ENCODE measurements at regions of chr15 and their contacts with region 1.

Region 1: GRCh38 chr15:101014921-101015841 is 96.0 kb downstream of the LRRK1 start:
- DNase-seq: peak; percentile 68 to 92
- ATAC-seq: peak; percentile 74 to 84
- H3K4me3 ChIP-seq: no peak overlapping the region
- H3K27ac ChIP-seq: no peak overlapping the region
- H3K4me1 ChIP-seq: no peaks in the 10 kb centered on the region
- CTCF ChIP-seq: peak; percentile 93
- EP300 ChIP-seq: no peak
- POLR2A ChIP-seq: no peak
- RAD21 ChIP-seq: peak; percentile 85 to 88

Region 2: DNA sequence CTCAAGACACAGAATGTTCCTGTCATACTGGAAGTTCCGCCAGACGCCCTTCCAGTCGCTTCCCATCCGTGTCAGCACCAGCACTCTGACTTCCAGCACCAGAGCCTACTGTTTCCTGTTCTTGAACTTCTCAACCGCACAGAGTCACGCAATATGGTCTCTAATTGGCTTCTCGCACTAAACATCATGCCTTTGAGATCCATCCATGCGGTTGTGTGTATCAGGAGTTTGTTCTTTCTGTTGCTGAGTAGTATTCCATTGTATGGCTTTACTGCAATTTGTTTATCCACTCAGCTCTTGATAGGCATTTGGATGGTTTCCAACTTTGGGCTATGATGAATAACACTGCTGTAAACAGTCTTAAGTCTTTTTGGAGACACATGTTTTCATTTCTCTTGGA is 16.0 kb after region 1 on chr15:
- CTCF ChIA-PET with region 1: interaction called, 12 read pairs
- POLR2A ChIA-PET with region 1: no interaction called
- DNase-seq: no peak
- ATAC-seq: no peak
- H3K4me3 ChIP-seq: no peak overlapping the region
- H3K27ac ChIP-seq: no peak overlapping the region
- H3K4me1 ChIP-seq: no peaks in the 10 kb centered on the region
- CTCF ChIP-seq: no peak
- EP300 ChIP-seq: no peak
- POLR2A ChIP-seq: no peak
- RAD21 ChIP-seq: no peak

Region 3: GRCh38 chr15:101062471-101063171 is 47.4 kb after region 1 on chr15:
- CTCF ChIA-PET with region 1: interaction called, 10 read pairs
- POLR2A ChIA-PET with region 1: no interaction called
- DNase-seq: no peak
- ATAC-seq: no peak
- H3K4me3 ChIP-seq: no peak overlapping the region
- H3K27ac ChIP-seq: no peak overlapping the region
- H3K4me1 ChIP-seq: no peaks in the 10 kb centered on the region
- CTCF ChIP-seq: no peak
- EP300 ChIP-seq: no peak
- POLR2A ChIP-seq: no peak
- RAD21 ChIP-seq: no peak

Region 4: DNA sequence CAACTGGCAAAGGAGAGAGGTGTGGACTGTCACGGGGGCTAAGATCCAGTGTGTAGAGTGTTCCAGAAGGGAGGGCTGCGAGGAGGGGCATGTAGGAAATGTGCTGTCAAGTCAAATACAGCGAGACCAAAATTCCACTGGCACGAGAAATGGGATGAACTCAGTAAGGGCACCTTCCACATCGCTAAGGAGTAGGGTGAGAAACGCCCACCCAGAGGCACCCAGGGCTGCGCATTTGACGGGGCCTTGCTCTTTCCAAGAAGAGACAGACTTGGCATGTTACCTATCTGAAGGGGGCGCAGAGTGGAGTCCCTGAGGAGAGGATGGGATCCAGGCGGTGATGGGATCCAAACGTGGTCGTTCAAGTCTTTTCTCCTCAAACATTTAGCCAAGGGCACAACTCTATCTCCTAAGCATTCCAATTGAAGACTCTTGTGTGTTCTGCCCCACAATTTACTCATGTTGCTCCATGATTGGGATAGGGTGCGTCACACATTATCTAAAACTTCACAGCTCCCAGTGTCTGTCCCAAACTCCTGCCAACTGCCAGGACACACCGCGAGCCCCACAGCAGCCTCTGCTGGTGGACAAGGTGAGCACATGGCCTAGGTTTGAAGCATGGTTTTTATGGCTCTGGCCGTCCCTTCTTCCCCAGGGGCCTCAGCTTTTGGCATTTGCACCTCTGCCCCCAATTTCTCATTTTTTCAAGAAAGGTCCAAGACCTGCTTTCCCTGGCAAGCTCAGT is 254.5 kb after region 1 on chr15:
- CTCF ChIA-PET with region 1: interaction called, 23 read pairs
- POLR2A ChIA-PET with region 1: no interaction called
- DNase-seq: peak in 1 of 2 experiments; percentile 53
- ATAC-seq: peak; percentile 55 to 74; a peak in 5 of 6 replicates
- H3K4me3 ChIP-seq: no peak overlapping the region
- H3K27ac ChIP-seq: no peak overlapping the region
- H3K4me1 ChIP-seq: no peaks in the 10 kb centered on the region
- CTCF ChIP-seq: peak; percentile 35
- EP300 ChIP-seq: no peak
- POLR2A ChIP-seq: no peak
- RAD21 ChIP-seq: peak in 1 of 2 experiments; percentile 15; a peak in 1 of 5 replicates

Measured in A549 (cell line).